ENCODE measurements at regions of chr5 and their contacts with region 1.

Region 1: GRCh38 chr5:149442563-149443182 is 63.6 kb upstream of the IL17B start:
- DNase-seq: peak; percentile 75
- ATAC-seq: peak; percentile 80
- H3K4me3 Mint-ChIP-seq: no peak overlapping the region
- H3K27ac Mint-ChIP-seq: no peak overlapping the region
- H3K4me1 Mint-ChIP-seq: peaks cover 13% of the 10 kb centered on the region
- H3K27me3 Mint-ChIP-seq: peaks cover 5% of the 10 kb centered on the region

Region 2: GRCh38 chr5:149063017-149063687 is 379.5 kb before region 1 on chr5 and contains the start of gene SH3TC2:
- CTCF ChIA-PET with region 1: no interaction called
- DNase-seq: no peak
- ATAC-seq: no peak
- H3K4me3 Mint-ChIP-seq: no peak within 1 kb of the TSS
- H3K27ac Mint-ChIP-seq: no peak within 1 kb of the TSS
- H3K4me1 Mint-ChIP-seq: no peaks in the 10 kb centered on the region
- H3K27me3 Mint-ChIP-seq: peaks cover 17% of the 10 kb centered on the region
- total RNA-seq, gene SH3TC2: not detected

Region 3: DNA sequence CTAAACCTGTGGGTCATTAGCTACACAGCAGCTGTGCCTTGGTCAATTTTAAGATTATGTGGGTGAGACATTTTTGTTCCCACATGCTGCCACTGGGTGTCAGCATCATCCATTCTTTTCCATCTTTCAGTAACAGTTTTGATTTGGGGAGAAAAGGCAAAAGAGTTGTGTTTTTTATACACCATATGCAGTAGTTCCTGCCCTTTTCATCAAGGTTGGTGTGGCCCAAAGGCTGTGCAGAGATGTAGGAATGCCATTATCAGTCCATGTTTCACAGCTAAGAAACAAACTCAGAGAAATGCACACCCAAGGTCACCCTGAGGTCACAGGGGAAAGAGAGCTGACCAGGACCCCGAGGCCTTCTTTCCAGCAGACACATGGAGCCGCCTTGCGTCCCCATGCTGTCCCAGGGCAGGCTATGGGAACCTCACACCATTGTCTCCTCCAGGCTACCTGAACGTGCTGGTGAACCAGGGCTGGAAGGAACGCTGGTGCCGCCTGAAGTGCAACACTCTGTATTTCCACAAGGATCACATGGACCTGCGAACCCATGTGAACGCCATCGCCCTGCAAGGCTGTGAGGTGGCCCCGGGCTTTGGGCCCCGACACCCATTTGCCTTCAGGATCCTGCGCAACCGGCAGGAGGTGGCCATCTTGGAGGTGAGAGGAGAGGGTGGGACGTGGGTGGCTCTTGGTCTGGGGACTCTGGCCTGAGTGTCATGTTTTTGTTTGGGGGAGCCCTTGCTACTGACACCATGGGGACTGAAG is 125.2 kb before region 1 on chr5:
- CTCF ChIA-PET with region 1: interaction called, 12 read pairs
- DNase-seq: no peak
- ATAC-seq: peak; percentile 64
- H3K4me3 Mint-ChIP-seq: no peak overlapping the region
- H3K27ac Mint-ChIP-seq: no peak overlapping the region
- H3K4me1 Mint-ChIP-seq: peaks cover 3% of the 10 kb centered on the region
- H3K27me3 Mint-ChIP-seq: no peaks in the 10 kb centered on the region

Region 4: DNA sequence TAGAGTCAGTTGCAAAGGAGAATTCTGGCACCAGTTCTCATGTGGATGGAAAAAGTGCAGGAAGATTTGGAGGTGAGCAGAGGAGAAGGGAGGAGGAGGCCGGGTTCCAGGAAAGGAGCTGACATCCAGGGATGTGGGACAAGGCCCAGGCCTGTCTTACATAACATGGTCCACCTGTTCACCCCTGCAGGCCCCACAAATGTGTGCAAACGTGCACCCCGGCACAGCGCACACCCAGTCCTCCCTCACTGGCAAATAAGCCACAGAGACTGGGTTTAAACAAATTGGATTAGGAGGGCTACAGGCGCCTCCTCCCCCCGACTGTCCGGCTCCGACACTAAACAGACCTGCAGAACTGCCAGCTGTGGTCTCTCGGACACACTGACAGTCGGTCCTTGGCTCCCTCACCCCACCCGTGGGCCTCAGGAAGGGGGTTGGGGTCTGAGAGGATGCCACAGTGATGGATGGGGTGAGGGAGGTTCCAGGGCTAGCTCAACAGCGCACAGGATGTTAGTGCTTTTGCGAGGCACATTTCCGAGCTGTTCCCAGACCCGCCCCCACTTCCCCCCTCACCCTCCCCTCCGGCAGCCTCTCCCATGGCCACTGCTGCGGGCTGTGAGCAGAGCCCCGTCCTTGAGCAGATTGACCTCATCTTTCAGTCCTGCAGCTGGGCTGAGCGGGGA is 20.2 kb before region 1 on chr5:
- CTCF ChIA-PET with region 1: interaction called, 10 read pairs
- DNase-seq: no peak
- ATAC-seq: no peak
- H3K4me3 Mint-ChIP-seq: no peak overlapping the region
- H3K27ac Mint-ChIP-seq: no peak overlapping the region
- H3K4me1 Mint-ChIP-seq: no peaks in the 10 kb centered on the region
- H3K27me3 Mint-ChIP-seq: peaks cover 12% of the 10 kb centered on the region

Region 5: GRCh38 chr5:149504677-149505076 is 62.0 kb after region 1 on chr5:
- CTCF ChIA-PET with region 1: no interaction called
- DNase-seq: no peak
- ATAC-seq: no peak
- H3K4me3 Mint-ChIP-seq: no peak overlapping the region
- H3K27ac Mint-ChIP-seq: peak overlapping the region; percentile 31
- H3K4me1 Mint-ChIP-seq: peaks cover 2% of the 10 kb centered on the region
- H3K27me3 Mint-ChIP-seq: no peaks in the 10 kb centered on the region

Region 6: GRCh38 chr5:149561848-149562247 is 119.2 kb after region 1 on chr5:
- CTCF ChIA-PET with region 1: interaction called, 38 read pairs
- DNase-seq: no peak
- ATAC-seq: no peak
- H3K4me3 Mint-ChIP-seq: no peak overlapping the region
- H3K27ac Mint-ChIP-seq: no peak overlapping the region
- H3K4me1 Mint-ChIP-seq: peaks cover 5% of the 10 kb centered on the region
- H3K27me3 Mint-ChIP-seq: no peaks in the 10 kb centered on the region

Region 7: DNA sequence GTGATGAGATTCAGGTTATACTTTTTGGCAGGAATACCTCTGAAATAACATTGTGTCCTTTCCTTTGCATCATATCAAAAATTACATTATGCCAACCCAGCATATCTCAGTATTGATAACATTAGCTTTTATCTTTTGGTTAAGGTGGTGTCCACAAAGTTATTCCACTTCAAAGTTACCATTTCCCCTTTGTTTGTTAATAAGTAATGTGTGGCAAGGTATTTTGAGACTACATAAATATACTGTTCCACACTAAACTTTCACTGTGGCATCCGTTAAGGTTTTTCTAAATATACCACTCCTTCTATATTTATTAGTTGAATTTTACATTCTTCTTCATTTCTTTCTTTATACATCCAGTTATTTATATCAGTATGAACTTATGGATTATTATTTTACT is 124.6 kb after region 1 on chr5:
- CTCF ChIA-PET with region 1: interaction called, 38 read pairs
- DNase-seq: no peak
- ATAC-seq: no peak
- H3K4me3 Mint-ChIP-seq: no peak overlapping the region
- H3K27ac Mint-ChIP-seq: no peak overlapping the region
- H3K4me1 Mint-ChIP-seq: no peaks in the 10 kb centered on the region
- H3K27me3 Mint-ChIP-seq: no peaks in the 10 kb centered on the region

Region 8: DNA sequence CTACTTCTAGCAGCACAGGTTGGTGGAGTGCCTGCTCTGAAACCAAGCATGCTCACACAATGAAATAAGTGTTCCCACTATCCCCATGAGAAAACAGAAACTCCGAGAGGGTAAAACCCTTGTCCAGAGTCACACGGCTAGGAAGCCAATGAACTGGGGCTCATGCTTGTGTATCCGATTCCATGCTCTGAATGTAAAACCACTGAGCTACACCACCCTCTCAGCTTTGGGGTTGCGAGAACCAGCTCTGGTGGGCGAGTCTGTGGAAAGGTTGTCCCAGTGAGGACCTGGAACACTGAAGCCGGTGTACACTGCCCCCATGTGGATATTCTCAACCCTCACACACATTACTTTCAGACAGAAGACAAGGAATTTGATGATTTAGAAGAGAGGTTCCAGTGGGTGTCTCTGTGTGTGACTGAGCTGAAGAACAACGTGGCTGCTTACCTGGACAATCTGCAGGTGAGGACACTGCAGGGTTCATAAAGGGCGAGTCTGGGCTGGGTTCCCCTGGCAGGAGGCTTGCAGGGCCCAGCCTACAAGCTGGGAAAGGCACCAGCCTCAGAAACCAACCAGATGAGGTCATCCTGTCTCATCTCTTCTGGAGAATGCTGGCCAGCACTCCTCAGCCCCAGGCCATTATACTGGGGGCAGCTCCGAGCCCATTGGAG is 176.0 kb after region 1 on chr5:
- CTCF ChIA-PET with region 1: interaction called, 14 read pairs
- DNase-seq: peak; percentile 57
- ATAC-seq: peak; percentile 69
- H3K4me3 Mint-ChIP-seq: no peak overlapping the region
- H3K27ac Mint-ChIP-seq: no peak overlapping the region
- H3K4me1 Mint-ChIP-seq: peaks cover 29% of the 10 kb centered on the region
- H3K27me3 Mint-ChIP-seq: peaks cover 4% of the 10 kb centered on the region

Region 9: DNA sequence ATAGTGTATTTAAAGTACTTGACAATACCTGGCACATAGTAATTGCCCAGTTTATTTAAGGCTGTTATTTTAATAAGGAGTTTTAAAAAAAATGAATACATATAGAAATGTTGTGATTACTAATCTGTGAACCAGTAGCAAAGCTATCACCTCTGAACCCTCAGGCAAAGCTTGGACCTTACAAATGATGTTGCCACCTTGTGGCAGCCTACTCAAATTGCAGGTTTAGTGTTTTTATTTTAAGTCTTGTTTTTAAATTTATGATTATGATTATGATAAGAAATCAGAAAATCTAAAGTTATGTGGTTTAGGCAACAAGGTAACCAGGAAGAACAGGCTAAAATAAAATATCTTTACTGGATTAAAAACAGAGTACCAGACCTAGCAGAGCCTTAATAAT is 323.3 kb after region 1 on chr5:
- CTCF ChIA-PET with region 1: no interaction called
- DNase-seq: no peak
- ATAC-seq: no peak
- H3K4me3 Mint-ChIP-seq: no peak overlapping the region
- H3K27ac Mint-ChIP-seq: no peak overlapping the region
- H3K4me1 Mint-ChIP-seq: no peaks in the 10 kb centered on the region
- H3K27me3 Mint-ChIP-seq: no peaks in the 10 kb centered on the region